CD4-positive, alpha-beta memory T cell (primary cell): ENCODE measurements at regions of chr6 and their contacts with region 1.

Region 1: DNA sequence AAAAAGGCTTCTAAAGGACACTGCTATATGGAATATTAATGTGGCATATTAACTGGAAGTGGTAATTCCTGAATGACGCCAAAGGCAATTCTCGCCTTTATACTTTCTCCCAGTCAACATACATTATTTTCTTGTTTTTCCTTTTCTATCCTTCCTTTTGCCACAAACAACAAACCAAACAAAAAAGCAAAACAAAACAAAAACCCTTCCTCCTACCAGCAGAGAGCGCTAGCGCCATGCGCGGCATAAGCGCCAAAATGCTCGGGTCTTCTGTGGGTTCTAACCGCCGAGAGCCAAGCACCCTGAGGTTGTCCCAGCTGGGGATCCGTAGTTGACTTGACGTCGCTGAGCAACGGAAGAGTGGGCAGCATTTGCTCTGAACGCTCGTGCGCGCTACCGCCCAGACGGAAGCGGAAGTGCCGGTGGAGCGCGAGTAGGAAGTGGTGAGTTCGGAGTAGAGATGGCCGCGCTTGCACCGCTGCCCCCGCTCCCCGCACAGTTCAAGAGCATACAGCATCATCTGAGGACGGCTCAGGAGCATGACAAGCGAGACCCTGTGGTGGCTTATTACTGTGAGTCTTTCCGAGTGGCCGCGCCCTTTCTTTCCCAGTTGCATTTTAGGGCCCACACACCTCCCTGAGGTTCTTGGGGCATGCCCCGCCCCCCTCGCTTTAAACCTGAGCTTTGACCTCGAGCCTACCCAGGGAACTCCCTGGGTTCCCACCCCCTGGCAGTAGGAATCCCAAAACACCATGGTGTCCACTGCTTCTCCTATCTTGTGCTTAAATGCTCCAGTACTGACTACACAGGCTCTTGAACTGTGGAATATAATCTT is at the starts of genes NMBR and VTA1:
- DNase-seq: peak; percentile 97 to 98 (median 98)
- H3K4me3 ChIP-seq: peak within 1 kb of the TSS; percentile 86 to 100
- H3K4me3 Mint-ChIP-seq: peak within 1 kb of the TSS; percentile 81 to 97 (median 94)
- H3K27ac ChIP-seq: peak within 1 kb of the TSS; percentile 73
- H3K27ac Mint-ChIP-seq: peak within 1 kb of the TSS; percentile 83 to 96 (median 94)
- H3K4me1 ChIP-seq: peaks cover 39% of the 10 kb centered on the region
- H3K4me1 Mint-ChIP-seq: peaks cover 46 to 61% (median 53%) of the 10 kb centered on the region in 4 donors
- H3K27me3 ChIP-seq: no peaks in the 10 kb centered on the region
- H3K27me3 Mint-ChIP-seq: no peaks in the 10 kb centered on the region
- total RNA-seq, gene NMBR: not detected
- total RNA-seq, gene VTA1: 31.2 to 31.4 TPM

Region 2: GRCh38 chr6:141483598-141484061 is 663.4 kb before region 1 on chr6:
- CTCF ChIA-PET with region 1: no interaction called
- POLR2A ChIA-PET with region 1: no interaction called
- intact Hi-C with region 1: loop called (anchors 2 kb)
- DNase-seq: peak; percentile 76 to 85 (median 83)
- H3K4me3 ChIP-seq: peak overlapping the region in 1 of 2 donors; percentile 8
- H3K4me3 Mint-ChIP-seq: peak overlapping the region; percentile 76 to 94 (median 86)
- H3K27ac ChIP-seq: peak overlapping the region; percentile 72
- H3K27ac Mint-ChIP-seq: peak overlapping the region; percentile 82 to 96 (median 95)
- H3K4me1 ChIP-seq: peaks cover 30% of the 10 kb centered on the region
- H3K4me1 Mint-ChIP-seq: peaks cover 29 to 50% (median 32%) of the 10 kb centered on the region in 4 donors
- H3K27me3 ChIP-seq: no peaks in the 10 kb centered on the region
- H3K27me3 Mint-ChIP-seq: no peaks in the 10 kb centered on the region

Region 3: DNA sequence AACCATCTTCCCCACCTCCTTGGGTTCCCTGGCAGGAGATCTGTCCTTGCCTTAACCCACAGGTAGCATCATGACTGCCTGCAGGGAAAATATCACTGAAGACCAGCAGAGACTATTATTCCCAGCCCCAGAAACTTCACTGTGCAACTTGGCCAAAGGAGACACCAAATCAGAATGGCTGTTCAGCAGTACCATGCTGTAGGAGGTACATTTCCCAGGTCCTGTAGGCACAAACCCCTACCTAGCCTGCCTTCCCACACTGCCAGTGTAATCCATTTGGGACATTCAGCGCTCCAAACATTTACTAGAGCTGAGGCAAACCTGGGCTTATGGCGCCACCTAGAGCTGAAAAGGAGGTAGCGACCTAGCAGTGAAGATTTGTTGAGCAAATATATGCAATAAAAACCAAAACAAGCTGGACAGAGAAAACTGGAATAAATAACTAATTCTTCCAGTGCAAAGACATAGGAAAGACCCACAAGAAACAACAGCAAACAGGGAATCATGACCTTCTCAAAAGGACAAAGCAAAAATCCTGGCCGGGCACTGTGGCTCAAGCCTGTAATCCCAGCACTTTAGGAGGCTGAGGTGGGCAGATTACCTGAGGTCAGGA is 60.3 kb after region 1 on chr6:
- CTCF ChIA-PET with region 1: interaction called, 19 read pairs
- POLR2A ChIA-PET with region 1: no interaction called
- intact Hi-C with region 1: loop called (anchors 1 kb)
- DNase-seq: peak; percentile 27 to 42 (median 33)
- H3K4me3 ChIP-seq: no peak overlapping the region
- H3K4me3 Mint-ChIP-seq: no peak overlapping the region
- H3K27ac ChIP-seq: no peak overlapping the region
- H3K27ac Mint-ChIP-seq: peak overlapping the region in 2 of 7 donors; percentile 35 to 74
- H3K4me1 ChIP-seq: no peaks in the 10 kb centered on the region
- H3K4me1 Mint-ChIP-seq: peaks cover 0 to 5% (median 2%) of the 10 kb centered on the region in 4 donors
- H3K27me3 ChIP-seq: no peaks in the 10 kb centered on the region
- H3K27me3 Mint-ChIP-seq: no peaks in the 10 kb centered on the region

Region 4: DNA sequence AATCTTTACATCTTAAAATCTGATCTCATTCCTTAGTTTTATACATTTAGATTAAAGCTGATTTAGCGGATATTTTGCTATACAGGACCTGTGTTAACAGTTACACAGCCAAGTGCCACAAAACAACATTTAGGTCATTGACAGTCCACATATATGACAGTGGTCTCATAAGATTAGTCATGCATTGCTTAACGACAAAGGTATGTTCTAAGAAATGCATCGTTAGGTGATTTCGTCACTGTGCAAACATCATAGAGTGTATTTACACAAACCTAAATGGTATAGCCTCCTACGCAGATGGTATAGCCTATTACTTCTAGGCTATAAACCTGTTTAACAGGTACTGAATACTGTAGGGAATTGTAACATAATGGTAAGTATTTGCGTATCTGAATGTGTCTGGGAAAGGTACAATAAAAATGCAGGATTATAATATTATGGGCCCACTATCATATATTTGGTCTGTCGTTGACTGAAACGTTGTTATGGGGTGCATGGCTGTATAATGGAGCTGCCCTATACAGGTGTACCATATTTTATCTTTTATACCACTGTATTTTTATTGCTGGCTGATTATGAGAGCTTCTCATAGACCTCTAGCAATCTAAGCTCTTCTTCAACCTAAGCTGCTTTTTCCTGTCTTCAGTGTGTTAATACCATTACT is 176.5 kb after region 1 on chr6:
- CTCF ChIA-PET with region 1: no interaction called
- POLR2A ChIA-PET with region 1: no interaction called
- intact Hi-C with region 1: no loop called
- DNase-seq: no peak
- H3K4me3 ChIP-seq: no peak overlapping the region
- H3K4me3 Mint-ChIP-seq: no peak overlapping the region
- H3K27ac ChIP-seq: no peak overlapping the region
- H3K27ac Mint-ChIP-seq: no peak overlapping the region
- H3K4me1 ChIP-seq: no peaks in the 10 kb centered on the region
- H3K4me1 Mint-ChIP-seq: no peaks in the 10 kb centered on the region
- H3K27me3 ChIP-seq: no peaks in the 10 kb centered on the region
- H3K27me3 Mint-ChIP-seq: peaks cover 7 to 8% of the 10 kb centered on the region in 2 donors

Region 5: GRCh38 chr6:142474531-142475289 is 327.7 kb after region 1 on chr6:
- CTCF ChIA-PET with region 1: interaction called, 3 read pairs
- POLR2A ChIA-PET with region 1: no interaction called
- intact Hi-C with region 1: loop called (anchors 5 kb)
- DNase-seq: peak in 4 of 5 donors; percentile 33 to 42 (median 40)
- H3K4me3 ChIP-seq: no peak overlapping the region
- H3K4me3 Mint-ChIP-seq: no peak overlapping the region
- H3K27ac ChIP-seq: no peak overlapping the region
- H3K27ac Mint-ChIP-seq: no peak overlapping the region
- H3K4me1 ChIP-seq: no peaks in the 10 kb centered on the region
- H3K4me1 Mint-ChIP-seq: peaks cover 0 to 5% (median 2%) of the 10 kb centered on the region in 4 donors
- H3K27me3 ChIP-seq: no peaks in the 10 kb centered on the region
- H3K27me3 Mint-ChIP-seq: no peaks in the 10 kb centered on the region

Region 6: GRCh38 chr6:142692942-142693341 is 545.9 kb after region 1 on chr6:
- CTCF ChIA-PET with region 1: no interaction called
- POLR2A ChIA-PET with region 1: no interaction called
- intact Hi-C with region 1: loop called (anchors 5 kb)
- DNase-seq: peak; percentile 54 to 62 (median 58)
- H3K4me3 ChIP-seq: no peak overlapping the region
- H3K4me3 Mint-ChIP-seq: peak overlapping the region in 1 of 8 donors; percentile 58
- H3K27ac ChIP-seq: no peak overlapping the region
- H3K27ac Mint-ChIP-seq: peak overlapping the region in 4 of 7 donors; percentile 0 to 74 (median 60)
- H3K4me1 ChIP-seq: peaks cover 7% of the 10 kb centered on the region
- H3K4me1 Mint-ChIP-seq: peaks cover 5 to 21% (median 8%) of the 10 kb centered on the region in 4 donors
- H3K27me3 ChIP-seq: no peaks in the 10 kb centered on the region
- H3K27me3 Mint-ChIP-seq: no peaks in the 10 kb centered on the region

Region 7: GRCh38 chr6:143450453-143451371 is 1303.7 kb after region 1 on chr6 and contains the starts of genes ADAT2 and PEX3:
- CTCF ChIA-PET with region 1: interaction called, 4 read pairs
- POLR2A ChIA-PET with region 1: interaction called, 7 read pairs
- intact Hi-C with region 1: loop called (anchors 1 kb)
- DNase-seq: peak; percentile 94 to 95 (median 94)
- H3K4me3 ChIP-seq: peak within 1 kb of the TSS; percentile 95 to 99
- H3K4me3 Mint-ChIP-seq: peak within 1 kb of the TSS; percentile 94 to 100 (median 98)
- H3K27ac ChIP-seq: peak within 1 kb of the TSS; percentile 67
- H3K27ac Mint-ChIP-seq: peak within 1 kb of the TSS; percentile 86 to 99 (median 97)
- H3K4me1 ChIP-seq: peaks cover 28% of the 10 kb centered on the region
- H3K4me1 Mint-ChIP-seq: peaks cover 25 to 49% (median 36%) of the 10 kb centered on the region in 4 donors
- H3K27me3 ChIP-seq: no peaks in the 10 kb centered on the region
- H3K27me3 Mint-ChIP-seq: no peaks in the 10 kb centered on the region
- total RNA-seq, gene ADAT2: 10.5 to 11.2 TPM
- total RNA-seq, gene PEX3: 20.8 to 23.5 TPM